ENCODE measurements at regions of chr6 and their contacts with region 1.

Region 1: DNA sequence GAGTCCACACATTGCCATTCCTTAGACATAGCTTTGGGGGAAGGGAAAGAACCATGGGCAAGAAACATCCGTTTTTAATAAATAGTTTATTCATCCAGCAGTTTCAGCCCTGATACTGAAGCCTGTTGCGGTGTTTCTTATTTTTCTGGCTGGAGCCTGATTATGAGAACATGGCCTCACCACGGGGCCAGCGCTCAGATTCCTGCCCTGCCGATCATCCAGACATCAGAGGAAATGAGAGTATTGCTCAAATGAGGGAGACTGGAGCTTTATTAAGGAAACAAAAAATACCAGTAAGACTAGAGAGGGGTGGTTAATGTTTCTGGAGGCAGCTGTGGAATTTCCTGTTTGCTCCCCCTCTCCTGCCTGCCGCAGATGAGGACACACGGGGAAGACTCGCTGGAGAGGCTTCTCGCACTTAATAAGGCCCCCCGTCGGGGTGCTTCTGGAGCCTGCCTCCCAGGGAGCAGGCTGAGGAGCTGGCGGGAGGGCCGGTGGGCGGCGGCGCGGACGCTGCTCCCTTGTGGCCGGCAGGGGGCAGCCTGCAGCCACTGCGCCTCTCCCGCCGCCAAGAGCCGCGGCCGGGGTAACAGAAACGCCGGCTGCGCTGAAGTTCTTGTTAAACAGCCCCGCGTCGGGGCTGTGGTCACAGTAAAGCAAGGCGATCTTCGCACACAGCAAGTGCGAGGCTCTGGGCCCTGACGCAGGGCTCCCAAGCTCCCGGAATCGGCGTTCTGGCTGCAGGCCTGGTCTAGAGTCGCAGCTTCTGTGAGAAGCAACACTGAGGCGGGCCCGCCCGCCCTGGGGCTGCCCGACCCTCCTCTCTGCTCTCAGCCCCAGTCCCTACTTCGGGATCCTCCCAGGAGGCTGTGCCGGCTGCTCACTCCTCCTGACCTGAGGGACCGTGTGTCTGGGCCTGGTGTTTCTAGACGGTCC is 17.5 kb downstream of the LEMD2 start:
- DNase-seq: peak; percentile 91

Region 2: DNA sequence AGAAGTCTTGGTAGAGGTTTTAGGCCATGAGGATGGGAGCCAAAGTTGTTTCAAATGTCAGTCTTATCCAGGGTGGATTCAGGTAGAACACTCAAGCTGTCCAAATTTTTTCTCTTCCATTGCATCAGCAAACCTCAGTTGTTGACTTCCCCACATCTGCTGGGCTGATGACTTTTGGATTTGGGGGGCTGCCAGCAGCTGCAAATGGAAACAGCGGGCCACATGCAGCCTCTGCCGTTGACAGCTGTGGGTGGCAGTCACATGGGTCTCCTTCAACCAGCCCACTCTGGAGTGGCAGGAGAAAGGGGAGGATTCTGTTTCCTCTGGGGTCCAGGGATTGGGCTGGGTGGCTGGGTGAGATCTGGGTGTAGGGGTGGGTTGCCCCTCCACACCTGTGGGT is 38.2 kb after region 1 on chr6:
- intact Hi-C with region 1: loop called in 1 of 2 experiments (anchors 1 kb)
- DNase-seq: no peak

Region 3: GRCh38 chr6:33988121-33989015 is 217.0 kb after region 1 on chr6:
- intact Hi-C with region 1: no loop called
- DNase-seq: peak; percentile 58

Region 4: GRCh38 chr6:34027445-34027936 is 256.1 kb after region 1 on chr6:
- intact Hi-C with region 1: loop called (anchors 5 to 10 kb)
- DNase-seq: peak; percentile 79

Region 5: DNA sequence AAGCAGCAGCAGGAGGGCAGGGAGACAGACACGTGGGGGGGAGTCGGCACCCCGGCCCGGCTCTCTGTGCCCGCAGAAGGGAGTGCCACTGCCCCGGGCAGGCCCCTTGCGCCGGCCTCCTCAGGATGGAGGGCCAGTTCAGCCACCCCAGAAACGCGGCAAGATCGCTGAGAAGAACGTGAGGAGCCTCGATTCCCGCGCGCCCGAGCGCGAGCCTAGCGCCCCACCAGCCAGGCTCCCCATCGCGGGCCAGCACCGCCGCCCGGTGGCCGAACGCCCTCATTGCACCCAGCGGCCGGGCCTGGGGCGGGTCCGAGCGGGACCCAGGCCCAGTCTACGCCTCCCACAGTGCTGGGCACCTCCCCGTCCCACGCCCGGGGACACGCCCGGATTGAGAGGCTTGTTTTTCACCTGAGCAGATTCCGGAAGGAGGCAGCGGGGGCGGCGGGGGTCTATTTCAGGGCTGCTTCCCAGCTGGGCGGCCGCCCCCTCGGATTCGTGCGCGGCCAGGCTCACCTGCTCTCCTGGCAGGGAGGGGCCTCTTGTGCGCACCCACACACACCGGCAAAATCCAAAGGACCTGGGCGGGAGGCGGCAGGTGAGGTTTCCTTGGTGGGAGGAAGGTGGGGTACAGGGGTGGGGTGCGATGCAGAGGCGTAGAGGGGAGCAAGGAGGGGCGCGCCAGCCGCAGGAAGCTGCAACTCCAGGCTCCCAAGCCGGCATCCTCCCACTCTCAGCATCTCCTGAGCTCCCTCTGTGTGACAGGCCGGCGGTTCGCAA is 383.4 kb after region 1 on chr6:
- intact Hi-C with region 1: loop called (anchors 5 to 10 kb)
- DNase-seq: peak; percentile 88

Region 6: DNA sequence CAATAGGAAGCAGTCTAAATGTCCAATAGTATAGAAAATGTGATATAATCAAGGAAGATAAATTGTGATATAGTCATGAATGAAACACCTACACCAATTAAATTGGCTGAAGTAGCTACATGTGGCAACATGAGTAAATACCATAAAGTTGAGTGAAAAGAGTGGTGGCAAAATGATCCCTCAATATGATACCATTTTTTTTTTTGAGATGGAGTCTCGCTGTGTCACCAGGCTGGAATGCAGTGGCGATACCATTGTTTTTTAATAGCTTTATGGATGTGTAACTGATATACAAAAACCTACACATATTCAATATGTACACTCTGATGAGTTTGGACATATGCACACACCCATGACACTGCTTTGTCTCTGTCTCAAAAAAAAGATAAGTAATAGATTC is 946.1 kb after region 1 on chr6:
- intact Hi-C with region 1: loop called in 1 of 2 experiments (anchors 10 kb)
- DNase-seq: no peak

Measured in posterior vena cava (tissue), 2 donors.